AG04449 (cell line): ENCODE measurements at regions of chr6 and their contacts with region 1.

Region 1: DNA sequence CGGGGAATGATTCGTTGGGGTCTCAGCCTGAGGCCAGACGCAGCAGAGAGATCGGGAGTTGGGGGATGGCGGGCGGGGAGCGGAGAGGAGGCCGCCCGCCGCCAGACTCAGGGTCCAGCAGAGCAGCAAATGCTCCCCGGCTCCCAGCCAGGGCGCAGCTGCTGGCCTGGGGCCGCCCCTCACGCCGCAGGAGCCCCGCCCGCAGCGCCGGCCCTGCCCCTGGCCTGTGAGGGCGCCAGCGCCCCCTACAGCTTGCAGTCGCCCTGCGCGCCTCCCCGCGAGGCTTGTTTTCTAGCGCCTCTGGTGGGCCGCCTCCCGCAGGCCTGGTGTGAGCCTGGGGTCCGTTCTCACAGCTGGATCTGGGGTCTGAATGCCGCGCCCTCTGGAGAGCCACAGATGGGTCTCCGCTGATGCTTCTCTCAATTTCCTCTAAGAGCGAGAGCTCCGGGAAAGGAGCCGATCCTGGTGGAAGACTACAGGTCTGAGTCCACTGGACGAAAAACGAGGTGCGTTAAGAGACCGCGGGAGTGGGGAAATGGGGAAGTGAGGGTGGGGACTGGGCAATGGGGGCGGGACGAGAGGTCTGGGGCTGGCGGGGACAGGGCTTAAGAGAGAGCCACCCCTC is 29.9 kb downstream of the TRIM38 start:
- DNase-seq: peak; percentile 24
- H3K4me3 ChIP-seq: peak overlapping the region; percentile 75
- CTCF ChIP-seq: peak; percentile 99

Region 2: DNA sequence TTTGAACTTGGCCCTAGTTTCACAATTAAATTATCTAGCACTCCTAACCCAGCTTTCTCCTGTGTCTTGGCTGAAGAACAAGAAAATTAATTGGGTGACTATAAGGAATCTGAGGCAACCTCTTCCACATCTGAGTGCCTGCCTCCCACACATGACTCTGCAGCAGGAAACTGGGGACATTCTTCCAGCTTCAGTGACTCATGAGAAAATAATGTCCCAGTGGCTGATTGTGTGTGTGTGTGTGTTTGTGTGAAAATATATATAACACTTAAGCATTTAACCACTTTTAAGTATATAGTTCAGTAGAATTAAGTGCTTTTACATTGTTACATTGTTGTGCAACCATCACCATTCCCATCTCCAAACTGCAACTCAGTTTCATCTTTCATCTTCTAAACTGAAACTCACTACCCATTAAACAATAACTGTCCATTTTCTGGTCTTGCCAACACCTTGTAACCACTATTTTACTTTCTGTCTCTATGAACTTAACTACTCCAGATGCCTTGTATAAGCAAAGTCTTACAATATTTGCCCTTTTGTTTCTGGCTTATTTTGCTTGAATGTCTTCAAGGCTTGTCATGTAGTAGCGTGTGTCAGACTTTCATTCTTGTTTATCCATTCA is 21.2 kb before region 1 on chr6:
- CTCF ChIA-PET with region 1: interaction called, 54 read pairs
- POLR2A ChIA-PET with region 1: interaction called, 5 read pairs
- DNase-seq: peak; percentile 90
- H3K4me3 ChIP-seq: no peak overlapping the region
- CTCF ChIP-seq: no peak

Region 3: GRCh38 chr6:25981568-25982263 is 10.8 kb before region 1 on chr6:
- CTCF ChIA-PET with region 1: interaction called, 62 read pairs
- POLR2A ChIA-PET with region 1: no interaction called
- DNase-seq: no peak
- H3K4me3 ChIP-seq: no peak overlapping the region
- CTCF ChIP-seq: no peak

Region 4: DNA sequence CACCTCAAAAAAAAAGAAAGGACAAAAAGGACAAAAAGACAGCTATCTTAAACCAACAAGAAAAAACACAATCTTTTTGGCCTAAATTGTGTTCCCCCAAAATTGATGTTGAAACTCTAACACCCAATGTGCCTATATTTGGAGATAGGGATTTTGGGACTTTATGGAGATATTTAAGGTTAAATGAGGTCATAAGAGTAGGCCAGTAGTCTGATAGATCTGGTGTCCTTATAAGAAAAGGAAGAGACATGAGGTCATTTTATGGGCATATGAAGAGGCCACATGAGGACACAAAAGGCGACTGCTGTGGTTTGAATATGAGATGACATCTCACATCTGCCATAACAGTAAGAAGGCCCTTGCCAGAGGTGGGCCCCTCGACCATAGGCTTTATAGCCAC is 19.5 kb after region 1 on chr6:
- CTCF ChIA-PET with region 1: interaction called, 90 read pairs
- POLR2A ChIA-PET with region 1: interaction called, 7 read pairs
- DNase-seq: no peak
- H3K4me3 ChIP-seq: no peak overlapping the region
- CTCF ChIP-seq: no peak

Region 5: DNA sequence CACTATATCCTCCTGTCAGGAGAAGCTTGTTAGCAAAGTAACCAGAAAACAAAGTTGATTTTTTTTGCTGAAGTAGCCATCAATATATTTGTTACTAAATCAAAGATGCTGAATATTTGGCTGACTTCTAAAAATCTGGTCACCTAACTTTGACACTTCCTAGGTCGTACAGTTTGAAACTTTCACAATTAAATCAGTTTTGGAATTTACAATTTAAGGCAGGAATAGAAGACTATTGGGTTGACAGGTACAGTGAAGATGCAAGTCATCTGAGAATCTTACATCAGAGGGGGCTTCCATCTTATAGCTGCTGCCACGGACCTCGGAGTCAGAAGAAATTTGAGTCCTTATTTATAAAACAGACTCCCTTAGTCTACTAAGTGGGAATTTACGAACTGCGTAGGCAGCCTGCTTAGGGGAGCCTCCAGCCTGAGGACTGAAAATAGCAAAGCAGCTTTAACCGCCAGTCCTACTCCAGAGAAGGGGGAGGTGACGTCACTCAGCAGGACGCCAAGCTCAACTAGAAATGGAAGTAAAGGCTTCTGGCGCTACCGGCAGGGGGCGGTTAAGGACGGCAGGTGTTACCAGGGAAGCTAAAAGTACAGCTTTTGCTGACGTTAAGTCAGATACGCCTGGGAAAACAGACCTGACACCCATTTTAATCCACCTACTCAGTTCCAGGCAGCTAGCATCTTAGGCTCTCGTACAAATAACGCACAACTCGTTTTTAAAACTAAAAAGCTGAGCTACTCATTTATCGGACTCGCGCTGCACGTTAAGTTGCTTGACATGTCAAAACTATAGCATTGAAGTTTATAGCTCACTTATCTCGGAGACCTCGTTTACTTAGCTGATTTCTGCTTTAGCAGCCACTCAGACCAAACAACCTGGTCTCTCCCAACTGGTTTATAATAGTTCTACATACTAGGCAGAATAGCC is 33.6 kb after region 1 on chr6:
- CTCF ChIA-PET with region 1: interaction called, 90 read pairs
- POLR2A ChIA-PET with region 1: interaction called, 21 read pairs
- DNase-seq: no peak
- H3K4me3 ChIP-seq: peak overlapping the region; percentile 84
- CTCF ChIP-seq: peak; percentile 90

Region 6: DNA sequence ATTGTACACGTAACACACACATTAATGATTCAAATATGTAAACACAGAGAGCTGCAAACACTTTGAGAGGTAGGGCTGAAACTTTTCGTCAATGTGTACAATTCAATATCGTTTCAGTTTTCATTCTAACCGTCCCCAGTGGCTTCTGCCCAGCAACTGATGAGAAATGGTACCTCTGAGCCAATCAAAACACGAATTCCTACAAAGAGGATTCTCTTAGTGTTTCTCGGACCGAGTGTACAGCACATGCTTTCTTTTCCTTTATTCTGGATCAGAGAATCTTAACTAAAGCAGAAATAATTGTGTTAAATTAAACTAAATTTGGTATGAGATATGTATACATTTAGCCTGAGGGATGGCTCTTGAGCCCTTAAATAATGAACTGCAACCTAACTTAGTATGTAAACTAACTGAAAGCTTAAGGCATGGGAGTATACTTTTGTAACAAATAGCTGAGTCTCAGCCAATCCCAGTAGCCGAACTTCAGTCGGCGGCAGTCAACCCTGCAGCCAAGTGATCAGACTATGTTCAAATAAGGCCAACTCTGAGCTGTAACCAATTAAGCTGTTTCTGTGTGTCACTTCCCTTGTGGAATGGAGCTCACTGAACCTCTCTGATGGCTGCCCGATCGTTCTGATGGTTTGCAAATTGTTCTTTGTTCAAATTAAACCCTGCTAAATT is 481.4 kb after region 1 on chr6:
- CTCF ChIA-PET with region 1: no interaction called
- POLR2A ChIA-PET with region 1: no interaction called
- DNase-seq: peak; percentile 84
- H3K4me3 ChIP-seq: peak overlapping the region; percentile 53
- CTCF ChIP-seq: no peak